ENCODE measurements at regions of chr22 and their contacts with region 1.

Region 1: GRCh38 chr22:24208012-24208749 is 26.9 kb downstream of the SUSD2 start:
- DNase-seq: peak; percentile 97
- H3K4me3 ChIP-seq: no peak overlapping the region
- H3K27ac ChIP-seq: peak overlapping the region; percentile 71
- H3K4me1 ChIP-seq: peaks cover 33% of the 10 kb centered on the region
- H3K27me3 ChIP-seq: no peaks in the 10 kb centered on the region
- CTCF ChIP-seq: no peak

Region 2: GRCh38 chr22:23884140-23884539 is 324.0 kb before region 1 on chr22:
- CTCF ChIA-PET with region 1: no interaction called
- dilution Hi-C with region 1: no loop called
- in situ Hi-C with region 1: no loop called
- intact Hi-C with region 1: no loop called
- DNase-seq: no peak
- H3K4me3 ChIP-seq: no peak overlapping the region
- H3K27ac ChIP-seq: no peak overlapping the region
- H3K4me1 ChIP-seq: peaks cover 7% of the 10 kb centered on the region
- H3K27me3 ChIP-seq: no peaks in the 10 kb centered on the region
- CTCF ChIP-seq: no peak

Region 3: DNA sequence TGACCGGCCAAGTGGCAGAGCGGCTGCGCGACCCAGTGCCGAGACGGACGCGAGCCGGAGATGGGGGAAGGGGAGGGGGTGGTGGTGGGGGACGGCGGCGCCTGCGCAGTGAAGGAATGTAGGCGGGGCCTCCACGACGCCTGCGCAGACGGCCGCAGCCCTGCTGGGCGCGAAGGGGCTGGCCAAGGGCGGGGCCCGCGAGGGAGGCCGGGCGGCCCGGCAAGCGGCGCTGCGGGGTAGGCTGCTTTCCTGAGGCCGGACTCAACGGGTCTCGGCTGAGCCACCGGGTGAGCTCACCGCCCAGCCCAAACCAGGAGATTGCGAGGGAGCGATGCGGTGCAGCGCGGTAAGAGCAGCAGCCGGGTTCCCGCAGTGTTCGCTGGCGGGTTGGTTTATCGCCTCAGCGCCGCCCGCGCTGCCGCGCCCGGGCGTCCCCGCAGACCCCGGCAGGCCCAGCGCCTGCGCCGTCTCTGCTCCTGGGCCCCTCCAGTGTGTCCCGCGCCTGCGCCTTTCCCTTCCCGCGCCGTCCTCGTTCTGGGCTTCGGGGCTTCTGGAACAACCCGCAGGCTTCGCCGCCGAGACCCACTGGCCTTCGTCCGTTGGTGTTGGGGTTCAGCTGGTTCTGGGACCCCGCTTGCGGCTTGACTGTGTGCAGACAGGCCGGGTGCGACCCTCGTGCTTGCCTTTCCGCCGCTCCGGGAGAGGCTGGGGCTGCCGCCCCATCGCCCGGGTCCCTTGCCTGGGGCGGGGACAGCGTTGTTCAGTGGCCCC is 62.6 kb after region 1 on chr22 and contains the start of gene SPECC1L:
- CTCF ChIA-PET with region 1: no interaction called
- dilution Hi-C with region 1: no loop called
- in situ Hi-C with region 1: no loop called
- intact Hi-C with region 1: loop called (anchors 10 kb)
- DNase-seq: peak; percentile 92
- H3K4me3 ChIP-seq: peak within 1 kb of the TSS; percentile 93 to 99 (median 98)
- H3K27ac ChIP-seq: peak within 1 kb of the TSS; percentile 83
- H3K4me1 ChIP-seq: peaks cover 8% of the 10 kb centered on the region
- H3K27me3 ChIP-seq: no peaks in the 10 kb centered on the region
- CTCF ChIP-seq: peak in 1 of 2 donors; percentile 25
- total RNA-seq, gene SPECC1L: 35.7 to 72.1 TPM

Region 4: DNA sequence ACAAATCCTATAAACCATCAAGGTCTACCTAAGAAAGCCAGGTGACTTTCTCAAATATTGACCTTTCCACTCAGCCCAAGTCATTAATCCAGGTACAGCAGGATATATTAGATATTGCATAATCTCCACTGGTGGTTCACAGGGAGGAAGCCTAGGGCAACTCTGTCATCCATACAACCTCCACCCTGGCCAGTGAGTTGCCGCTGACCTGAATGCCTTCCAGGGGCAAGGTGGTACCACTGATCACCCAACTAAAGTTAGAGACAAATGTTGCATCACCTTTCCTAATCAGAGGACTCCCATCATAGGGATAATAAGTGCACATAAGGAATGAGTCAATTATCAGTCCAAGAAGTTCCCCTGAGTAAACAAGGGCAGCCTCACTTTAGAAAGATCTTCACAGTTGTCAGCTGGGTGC is 323.9 kb after region 1 on chr22:
- CTCF ChIA-PET with region 1: no interaction called
- dilution Hi-C with region 1: loop called (anchors 10 kb)
- in situ Hi-C with region 1: no loop called
- intact Hi-C with region 1: no loop called
- DNase-seq: no peak
- H3K4me3 ChIP-seq: no peak overlapping the region
- H3K27ac ChIP-seq: no peak overlapping the region
- H3K4me1 ChIP-seq: no peaks in the 10 kb centered on the region
- H3K27me3 ChIP-seq: no peaks in the 10 kb centered on the region
- CTCF ChIP-seq: no peak